ENCODE measurements at regions of chr19 and their contacts with region 1.

Region 1: GRCh38 chr19:7348587-7349230 is at the start of gene ARHGEF18:
- DNase-seq: peak; percentile 14 to 85 (median 68)
- ATAC-seq: peak; percentile 68
- H3K4me3 ChIP-seq: peak within 1 kb of the TSS; percentile 92 to 96
- H3K4me3 Mint-ChIP-seq: peak within 1 kb of the TSS; percentile 90
- H3K27ac ChIP-seq: peak within 1 kb of the TSS; percentile 74 to 83
- H3K27ac Mint-ChIP-seq: peak within 1 kb of the TSS; percentile 96
- H3K4me1 ChIP-seq: peaks cover 62% of the 10 kb centered on the region
- H3K4me1 Mint-ChIP-seq: peaks cover 70% of the 10 kb centered on the region
- H3K27me3 ChIP-seq: no peaks in the 10 kb centered on the region
- H3K27me3 Mint-ChIP-seq: no peaks in the 10 kb centered on the region
- CTCF ChIP-seq: no peak
- total RNA-seq, gene ARHGEF18: 78.8 to 81.0 TPM

Region 2: GRCh38 chr19:5790573-5791520 is 1557.9 kb before region 1 on chr19 and contains the start of gene DUS3L:
- CTCF ChIA-PET with region 1: no interaction called
- POLR2A ChIA-PET with region 1: no interaction called
- intact Hi-C with region 1: no loop called
- DNase-seq: peak; percentile 91 to 98 (median 94)
- ATAC-seq: peak; percentile 95
- H3K4me3 ChIP-seq: peak within 1 kb of the TSS; percentile 86 to 91
- H3K4me3 Mint-ChIP-seq: peak within 1 kb of the TSS; percentile 97
- H3K27ac ChIP-seq: peak within 1 kb of the TSS; percentile 94 to 97
- H3K27ac Mint-ChIP-seq: peak within 1 kb of the TSS; percentile 99
- H3K4me1 ChIP-seq: peaks cover 7% of the 10 kb centered on the region
- H3K4me1 Mint-ChIP-seq: peaks cover 17% of the 10 kb centered on the region
- H3K27me3 ChIP-seq: no peaks in the 10 kb centered on the region
- H3K27me3 Mint-ChIP-seq: peaks cover 2% of the 10 kb centered on the region
- CTCF ChIP-seq: no peak
- total RNA-seq, gene DUS3L: 174 to 192 TPM

Region 3: GRCh38 chr19:6828306-6828697 is 520.4 kb before region 1 on chr19:
- CTCF ChIA-PET with region 1: no interaction called
- POLR2A ChIA-PET with region 1: no interaction called
- intact Hi-C with region 1: no loop called
- DNase-seq: no peak
- ATAC-seq: no peak
- H3K4me3 ChIP-seq: no peak overlapping the region
- H3K4me3 Mint-ChIP-seq: no peak overlapping the region
- H3K27ac ChIP-seq: no peak overlapping the region
- H3K27ac Mint-ChIP-seq: no peak overlapping the region
- H3K4me1 ChIP-seq: no peaks in the 10 kb centered on the region
- H3K4me1 Mint-ChIP-seq: peaks cover 9% of the 10 kb centered on the region
- H3K27me3 ChIP-seq: no peaks in the 10 kb centered on the region
- H3K27me3 Mint-ChIP-seq: no peaks in the 10 kb centered on the region
- CTCF ChIP-seq: no peak

Region 4: DNA sequence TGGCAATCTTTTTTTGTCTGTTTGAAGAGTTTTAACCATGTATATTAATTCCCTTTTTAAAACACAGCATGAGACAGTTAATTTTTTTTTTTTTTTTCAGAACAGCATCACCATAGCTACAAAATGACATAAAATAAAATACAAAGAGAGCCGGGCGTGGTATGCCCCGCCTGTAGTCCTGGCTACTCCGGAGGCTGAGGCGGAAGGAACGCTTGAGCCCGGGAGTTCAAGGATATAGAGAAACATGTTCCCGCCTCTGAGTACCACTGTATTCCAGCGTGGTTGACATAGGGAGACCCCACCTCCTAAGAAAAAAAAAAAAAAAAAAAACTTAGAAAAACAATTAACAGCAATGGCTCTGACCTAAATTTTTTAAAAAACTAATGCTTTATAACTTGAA is 44.5 kb before region 1 on chr19:
- CTCF ChIA-PET with region 1: no interaction called
- POLR2A ChIA-PET with region 1: no interaction called
- intact Hi-C with region 1: no loop called
- DNase-seq: no peak
- ATAC-seq: no peak
- H3K4me3 ChIP-seq: no peak overlapping the region
- H3K4me3 Mint-ChIP-seq: no peak overlapping the region
- H3K27ac ChIP-seq: no peak overlapping the region
- H3K27ac Mint-ChIP-seq: no peak overlapping the region
- H3K4me1 ChIP-seq: no peaks in the 10 kb centered on the region
- H3K4me1 Mint-ChIP-seq: no peaks in the 10 kb centered on the region
- H3K27me3 ChIP-seq: peaks cover 0 to 2% of the 10 kb centered on the region in 2 experiments
- H3K27me3 Mint-ChIP-seq: peaks cover 3% of the 10 kb centered on the region
- CTCF ChIP-seq: no peak

Region 5: DNA sequence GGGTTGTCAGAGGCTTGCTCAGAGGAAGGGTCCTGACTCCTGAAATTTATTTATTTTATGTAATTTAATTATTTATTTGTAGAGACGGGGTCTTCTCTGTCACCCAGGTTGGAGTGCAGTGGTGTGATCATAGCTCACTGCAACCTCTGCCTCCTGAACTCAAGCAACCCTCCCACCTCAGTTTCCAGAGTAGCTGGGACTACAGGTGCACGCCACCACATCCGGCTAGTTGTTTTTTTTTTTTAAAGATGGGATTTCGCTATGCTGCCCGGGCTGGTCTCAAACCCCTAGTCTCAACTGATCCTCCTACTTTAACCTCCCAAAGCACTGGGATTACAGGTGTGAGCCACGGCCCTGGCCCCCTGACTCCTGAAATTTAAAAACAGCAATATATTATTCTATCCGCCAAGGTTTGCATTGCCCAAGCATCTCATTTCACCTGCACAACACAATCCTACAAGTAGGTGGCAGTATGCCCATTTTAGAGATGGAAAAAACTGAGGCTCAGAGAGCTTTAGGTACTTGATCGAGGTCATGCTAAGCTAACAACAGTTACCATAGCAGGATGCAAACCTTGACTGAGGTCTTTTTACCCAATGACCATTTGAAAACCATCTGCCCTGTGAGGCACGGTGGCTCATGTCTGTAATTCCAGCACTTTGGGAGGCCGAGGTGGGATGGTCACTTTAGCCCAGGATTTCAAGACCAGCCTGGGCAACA is 18.2 kb after region 1 on chr19:
- CTCF ChIA-PET with region 1: interaction called, 14 read pairs
- POLR2A ChIA-PET with region 1: interaction called, 11 read pairs
- intact Hi-C with region 1: no loop called
- DNase-seq: peak in 2 of 9 experiments; percentile 36 to 55
- ATAC-seq: no peak
- H3K4me3 ChIP-seq: no peak overlapping the region
- H3K4me3 Mint-ChIP-seq: no peak overlapping the region
- H3K27ac ChIP-seq: no peak overlapping the region
- H3K27ac Mint-ChIP-seq: peak overlapping the region; percentile 32
- H3K4me1 ChIP-seq: peaks cover 16% of the 10 kb centered on the region
- H3K4me1 Mint-ChIP-seq: peaks cover 36% of the 10 kb centered on the region
- H3K27me3 ChIP-seq: no peaks in the 10 kb centered on the region
- H3K27me3 Mint-ChIP-seq: no peaks in the 10 kb centered on the region
- CTCF ChIP-seq: peak; percentile 29

Region 6: DNA sequence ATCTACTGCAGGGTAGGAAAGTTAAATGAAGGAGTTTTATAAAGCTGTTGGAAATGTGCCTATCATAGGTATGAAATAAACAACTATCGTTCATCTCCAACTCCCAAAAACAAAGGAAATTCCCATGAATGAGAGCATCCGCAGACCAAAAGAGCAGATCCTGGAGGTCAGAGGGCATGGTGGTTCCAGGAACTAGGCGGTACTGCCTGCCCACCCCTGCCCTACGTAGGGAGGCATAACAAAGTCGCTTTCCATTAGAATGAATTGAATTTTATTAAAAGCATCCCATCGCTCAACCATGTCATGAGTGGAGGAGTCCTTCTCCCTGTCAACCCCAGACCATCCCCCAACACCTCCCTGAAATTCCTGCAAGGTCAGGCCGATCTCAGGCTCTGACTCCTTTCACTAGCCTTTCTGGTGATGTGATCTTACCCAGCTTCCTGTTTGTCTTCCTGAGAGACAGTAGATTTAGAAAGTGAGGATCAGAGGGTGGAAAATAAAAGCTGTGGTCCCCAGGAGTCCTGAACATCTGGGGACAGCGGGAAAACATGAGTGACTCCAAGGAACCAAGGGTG is 414.1 kb after region 1 on chr19 and contains the start of gene CLEC4M:
- CTCF ChIA-PET with region 1: no interaction called
- POLR2A ChIA-PET with region 1: no interaction called
- intact Hi-C with region 1: no loop called
- DNase-seq: no peak
- ATAC-seq: no peak
- H3K4me3 ChIP-seq: no peak within 1 kb of the TSS
- H3K4me3 Mint-ChIP-seq: no peak within 1 kb of the TSS
- H3K27ac ChIP-seq: no peak within 1 kb of the TSS
- H3K27ac Mint-ChIP-seq: no peak within 1 kb of the TSS
- H3K4me1 ChIP-seq: peaks cover 5% of the 10 kb centered on the region
- H3K4me1 Mint-ChIP-seq: peaks cover 4% of the 10 kb centered on the region
- H3K27me3 ChIP-seq: peaks cover 0 to 2% of the 10 kb centered on the region in 2 experiments
- H3K27me3 Mint-ChIP-seq: peaks cover 3% of the 10 kb centered on the region
- CTCF ChIP-seq: no peak
- total RNA-seq, gene CLEC4M: not detected